ENCODE measurements at regions of chr5 and their contacts with region 1.

Region 1: GRCh38 chr5:50667653-50668595 is 1.5 kb downstream of the PARP8 start:
- DNase-seq: peak; percentile 92
- ATAC-seq: peak; percentile 71
- H3K4me3 Mint-ChIP-seq: peak overlapping the region; percentile 99
- H3K27ac Mint-ChIP-seq: peak overlapping the region; percentile 100
- H3K4me1 Mint-ChIP-seq: peaks cover 50% of the 10 kb centered on the region
- H3K27me3 Mint-ChIP-seq: no peaks in the 10 kb centered on the region
- CTCF ChIP-seq: no peak

Region 2: DNA sequence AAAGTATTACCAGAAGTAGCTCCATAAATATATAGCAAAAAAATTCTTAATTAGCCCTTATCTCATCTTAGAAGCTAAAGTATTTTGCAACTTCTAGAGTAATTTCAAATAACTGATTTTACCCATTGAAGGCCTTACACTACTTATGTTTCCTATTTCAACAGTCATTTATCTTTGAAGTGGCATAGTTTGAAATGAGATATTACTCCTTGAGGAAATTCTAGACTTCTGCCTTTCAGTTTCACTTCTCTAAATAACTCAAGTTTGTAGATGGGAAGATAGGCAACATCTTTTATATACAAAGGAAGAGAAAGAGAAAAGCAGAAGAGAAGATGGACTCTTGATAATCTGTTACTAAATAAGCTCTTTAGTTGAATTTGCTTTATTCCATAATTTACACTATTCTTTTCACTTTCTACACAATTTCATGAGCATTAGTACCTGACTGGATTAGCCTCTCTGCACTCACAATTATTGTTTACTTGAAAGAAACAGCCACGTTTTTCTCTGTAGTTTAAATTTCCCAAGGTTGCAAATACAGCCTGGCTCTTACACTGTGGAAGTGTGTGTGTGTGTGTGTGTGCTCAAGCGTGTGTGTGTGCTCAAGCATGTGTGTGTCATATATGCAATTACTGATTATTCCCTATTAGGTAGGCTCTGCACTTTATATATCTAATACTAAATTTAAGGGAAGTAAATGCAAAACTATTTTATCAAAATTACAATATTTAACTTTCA is 166.3 kb before region 1 on chr5:
- CTCF ChIA-PET with region 1: no interaction called
- POLR2A ChIA-PET with region 1: interaction called, 4 read pairs
- intact Hi-C with region 1: loop called (anchors 1 kb)
- DNase-seq: no peak
- ATAC-seq: peak; percentile 92
- H3K4me3 Mint-ChIP-seq: peak overlapping the region; percentile 44
- H3K27ac Mint-ChIP-seq: peak overlapping the region; percentile 82
- H3K4me1 Mint-ChIP-seq: peaks cover 15% of the 10 kb centered on the region
- H3K27me3 Mint-ChIP-seq: no peaks in the 10 kb centered on the region
- CTCF ChIP-seq: no peak

Region 3: DNA sequence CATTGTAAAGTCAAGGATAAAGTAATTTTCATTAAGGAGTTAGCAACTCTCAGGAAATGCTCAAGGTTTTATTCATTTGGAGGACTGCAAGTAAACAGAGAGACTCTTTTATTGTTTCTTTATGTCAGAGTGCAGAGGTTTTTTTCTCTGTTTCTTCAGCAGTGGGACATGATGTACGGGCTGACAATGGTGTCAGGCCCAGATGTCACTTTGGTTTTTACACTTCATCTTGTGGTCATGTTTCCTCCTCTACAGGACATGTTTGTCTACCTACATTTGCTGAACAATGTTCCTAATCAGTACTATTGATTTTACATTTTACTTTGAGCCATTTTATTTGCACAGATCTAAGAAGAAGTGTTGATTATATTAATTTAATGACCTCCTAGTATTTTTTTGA is 74.2 kb before region 1 on chr5:
- CTCF ChIA-PET with region 1: no interaction called
- POLR2A ChIA-PET with region 1: no interaction called
- intact Hi-C with region 1: no loop called
- DNase-seq: no peak
- ATAC-seq: no peak
- H3K4me3 Mint-ChIP-seq: no peak overlapping the region
- H3K27ac Mint-ChIP-seq: no peak overlapping the region
- H3K4me1 Mint-ChIP-seq: peaks cover 10% of the 10 kb centered on the region
- H3K27me3 Mint-ChIP-seq: no peaks in the 10 kb centered on the region
- CTCF ChIP-seq: no peak

Region 4: DNA sequence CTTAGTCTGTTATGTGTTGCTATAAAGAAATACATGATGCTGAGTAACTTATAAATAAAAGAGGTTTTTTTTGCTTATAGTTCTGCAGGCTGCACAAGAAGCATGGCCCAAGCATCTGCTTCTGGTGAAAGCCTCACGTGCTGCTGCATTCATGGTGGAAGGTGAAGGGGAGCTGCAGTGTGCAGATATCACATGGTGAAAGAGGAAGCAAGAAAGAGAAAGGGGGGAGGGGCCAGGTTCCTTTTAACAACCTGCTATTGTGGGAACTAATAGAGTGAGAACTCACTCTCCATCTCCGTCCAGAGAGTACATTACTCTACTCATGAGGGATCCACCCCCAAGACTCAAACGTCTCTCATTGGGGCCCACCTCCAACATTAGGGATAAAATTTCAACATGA is 14.0 kb before region 1 on chr5:
- CTCF ChIA-PET with region 1: no interaction called
- POLR2A ChIA-PET with region 1: interaction called, 13 read pairs
- intact Hi-C with region 1: loop called (anchors 1 kb)
- DNase-seq: peak; percentile 17
- ATAC-seq: peak; percentile 98
- H3K4me3 Mint-ChIP-seq: peak overlapping the region; percentile 49
- H3K27ac Mint-ChIP-seq: peak overlapping the region; percentile 81
- H3K4me1 Mint-ChIP-seq: peaks cover 28% of the 10 kb centered on the region
- H3K27me3 Mint-ChIP-seq: no peaks in the 10 kb centered on the region
- CTCF ChIP-seq: no peak

Region 5: GRCh38 chr5:50711273-50711672 is 43.3 kb after region 1 on chr5:
- CTCF ChIA-PET with region 1: interaction called, 3 read pairs
- POLR2A ChIA-PET with region 1: interaction called, 3 read pairs
- intact Hi-C with region 1: loop called (anchors 1 kb)
- DNase-seq: no peak
- ATAC-seq: peak; percentile 94
- H3K4me3 Mint-ChIP-seq: peak overlapping the region; percentile 76
- H3K27ac Mint-ChIP-seq: peak overlapping the region; percentile 89
- H3K4me1 Mint-ChIP-seq: peaks cover 68% of the 10 kb centered on the region
- H3K27me3 Mint-ChIP-seq: no peaks in the 10 kb centered on the region
- CTCF ChIP-seq: no peak

Region 6: GRCh38 chr5:50767588-50767987 is 99.7 kb after region 1 on chr5:
- CTCF ChIA-PET with region 1: no interaction called
- POLR2A ChIA-PET with region 1: no interaction called
- intact Hi-C with region 1: no loop called
- DNase-seq: no peak
- ATAC-seq: no peak
- H3K4me3 Mint-ChIP-seq: no peak overlapping the region
- H3K27ac Mint-ChIP-seq: no peak overlapping the region
- H3K4me1 Mint-ChIP-seq: peaks cover 6% of the 10 kb centered on the region
- H3K27me3 Mint-ChIP-seq: no peaks in the 10 kb centered on the region
- CTCF ChIP-seq: no peak

Region 7: GRCh38 chr5:50853151-50853550 is 185.2 kb after region 1 on chr5:
- CTCF ChIA-PET with region 1: no interaction called
- POLR2A ChIA-PET with region 1: interaction called, 4 read pairs
- intact Hi-C with region 1: loop called (anchors 10 kb)
- DNase-seq: peak; percentile 16
- ATAC-seq: peak; percentile 89
- H3K4me3 Mint-ChIP-seq: peak overlapping the region; percentile 33
- H3K27ac Mint-ChIP-seq: peak overlapping the region; percentile 38
- H3K4me1 Mint-ChIP-seq: peaks cover 57% of the 10 kb centered on the region
- H3K27me3 Mint-ChIP-seq: no peaks in the 10 kb centered on the region
- CTCF ChIP-seq: no peak

Measured in activated B cell treated with CpG ODN at 0.5 μM for 24 hours (primary cell).